A549 (cell line): ENCODE measurements at regions of chr6 and their contacts with region 1.

Region 1: DNA sequence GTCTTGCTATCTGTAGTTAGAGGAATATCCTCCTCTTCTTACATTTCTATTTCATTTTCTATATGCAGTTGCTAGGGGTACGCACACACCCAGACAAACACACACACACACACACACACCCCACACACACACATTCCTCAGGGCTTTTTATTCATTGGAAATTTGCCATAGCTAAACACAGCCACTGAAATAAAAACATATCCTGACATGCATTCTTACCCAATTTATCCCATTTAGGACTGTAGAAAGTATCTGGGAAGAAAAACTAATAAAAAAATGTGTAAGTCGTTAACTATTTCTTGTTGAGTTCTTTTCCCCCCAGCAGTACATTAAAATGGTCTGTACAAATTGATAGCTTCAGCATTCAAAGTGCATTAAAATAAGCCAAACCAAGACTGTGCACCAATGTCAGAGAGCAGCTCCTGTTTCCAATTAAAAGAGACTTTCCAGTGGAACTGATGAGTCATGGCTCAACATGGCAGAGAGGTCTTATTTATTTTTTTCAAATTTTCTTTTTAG is 357.9 kb upstream of the AGPAT4 start:
- DNase-seq: no peak
- ATAC-seq: no peak
- H3K4me3 ChIP-seq: no peak overlapping the region
- H3K27ac ChIP-seq: no peak overlapping the region
- H3K4me1 ChIP-seq: no peaks in the 10 kb centered on the region
- CTCF ChIP-seq: no peak
- EP300 ChIP-seq: no peak
- POLR2A ChIP-seq: no peak
- RAD21 ChIP-seq: no peak

Region 2: GRCh38 chr6:161618831-161619454 is 12.8 kb before region 1 on chr6:
- CTCF ChIA-PET with region 1: interaction called, 10 read pairs
- POLR2A ChIA-PET with region 1: no interaction called
- DNase-seq: peak; percentile 53 to 80
- ATAC-seq: peak; percentile 94 to 99
- H3K4me3 ChIP-seq: peak overlapping the region; percentile 29; the same call in 1 of the 3 replicates
- H3K27ac ChIP-seq: peak overlapping the region; percentile 56 to 76; a peak in 3 of 6 replicates
- H3K4me1 ChIP-seq: no peaks in the 10 kb centered on the region
- CTCF ChIP-seq: peak; percentile 65
- EP300 ChIP-seq: no peak
- POLR2A ChIP-seq: no peak
- RAD21 ChIP-seq: peak; percentile 79

Region 3: GRCh38 chr6:161701056-161701455 is 69.3 kb after region 1 on chr6:
- CTCF ChIA-PET with region 1: no interaction called
- POLR2A ChIA-PET with region 1: no interaction called
- DNase-seq: no peak
- ATAC-seq: no peak
- H3K4me3 ChIP-seq: no peak overlapping the region
- H3K27ac ChIP-seq: no peak overlapping the region
- H3K4me1 ChIP-seq: no peaks in the 10 kb centered on the region
- CTCF ChIP-seq: no peak
- EP300 ChIP-seq: no peak
- POLR2A ChIP-seq: no peak
- RAD21 ChIP-seq: no peak